ENCODE measurements at regions of chr17 and their contacts with region 1.

Region 1: GRCh38 chr17:68435876-68436842 is 21.1 kb downstream of the WIPI1 start:
- DNase-seq: peak; percentile 90
- H3K4me3 Mint-ChIP-seq: peak overlapping the region; percentile 38
- H3K27ac Mint-ChIP-seq: peak overlapping the region; percentile 79
- H3K4me1 Mint-ChIP-seq: peaks cover 51% of the 10 kb centered on the region
- H3K27me3 Mint-ChIP-seq: no peaks in the 10 kb centered on the region

Region 2: DNA sequence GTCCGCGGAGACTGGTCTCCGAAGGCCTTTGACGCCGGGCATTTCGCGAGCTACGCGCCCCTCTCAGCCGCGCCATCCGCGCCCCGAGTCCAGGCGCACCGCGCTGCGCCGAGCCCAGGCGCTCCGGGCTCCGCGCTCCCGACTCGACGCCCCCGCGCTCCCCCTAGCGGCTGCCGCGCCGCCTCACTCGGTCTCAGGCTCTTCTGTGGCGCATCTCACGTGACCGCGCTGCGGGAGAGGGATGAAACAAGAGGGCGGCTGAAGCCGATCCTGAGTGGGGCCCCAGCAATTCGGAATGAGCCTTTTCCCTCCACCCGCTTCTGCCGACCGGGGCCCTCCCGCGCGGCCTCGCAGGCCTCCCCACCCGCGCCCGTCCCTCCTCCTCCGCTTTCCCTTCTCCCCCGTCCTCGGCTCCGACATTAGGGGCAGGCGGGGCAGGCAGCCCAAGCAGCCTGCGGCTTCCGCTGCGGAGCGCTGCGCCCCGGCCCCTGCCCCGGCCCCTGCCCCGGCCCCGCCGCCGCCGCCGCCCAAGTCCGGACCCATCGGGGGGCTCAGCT is 230.8 kb before region 1 on chr17:
- CTCF ChIA-PET with region 1: interaction called, 17 read pairs
- POLR2A ChIA-PET with region 1: no interaction called
- intact Hi-C with region 1: loop called (anchors 2 kb)
- DNase-seq: peak; percentile 93
- H3K4me3 Mint-ChIP-seq: peak overlapping the region; percentile 81
- H3K27ac Mint-ChIP-seq: peak overlapping the region; percentile 89
- H3K4me1 Mint-ChIP-seq: peaks cover 32% of the 10 kb centered on the region
- H3K27me3 Mint-ChIP-seq: no peaks in the 10 kb centered on the region

Region 3: DNA sequence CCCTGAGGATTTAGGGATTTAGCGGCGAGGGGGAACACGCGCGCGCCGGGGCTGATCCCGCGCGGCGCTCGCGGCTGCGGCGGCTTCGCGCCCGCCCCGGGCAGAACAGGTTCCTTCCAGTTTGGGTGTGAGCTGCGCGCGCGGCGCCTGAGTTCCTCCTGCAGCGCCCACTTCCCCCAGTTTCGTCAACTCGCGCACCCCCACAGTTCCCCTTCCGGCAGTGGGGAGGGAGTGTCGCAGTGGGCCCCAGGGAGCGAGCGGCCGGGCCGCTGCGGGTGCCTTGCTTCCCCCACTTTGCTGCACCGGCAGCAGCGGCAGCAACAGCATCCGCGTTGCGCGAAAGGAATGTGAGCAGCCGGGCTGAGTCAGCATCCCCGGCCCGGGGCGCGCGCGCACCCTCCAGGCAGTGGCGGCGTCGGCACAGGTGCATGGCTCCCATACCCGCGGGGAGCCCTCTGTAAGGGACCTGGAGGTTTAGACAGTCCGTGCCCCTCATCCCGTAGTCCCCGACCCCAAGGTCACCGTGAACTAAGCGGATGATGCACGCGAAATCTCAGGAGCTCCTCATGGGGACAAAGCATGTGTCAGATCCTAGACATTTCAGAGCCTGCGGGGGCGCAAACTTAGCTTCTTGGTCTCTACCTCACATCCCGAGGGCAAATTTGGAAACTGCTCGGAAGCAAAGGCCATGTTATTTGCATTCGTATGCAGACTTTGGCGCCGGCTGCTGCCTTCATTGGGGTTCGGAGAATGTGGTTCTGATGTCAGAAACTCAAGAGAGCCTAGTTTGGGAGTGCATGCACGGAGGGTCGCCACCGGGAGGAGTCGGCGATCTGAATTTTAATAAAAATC is 144.1 kb before region 1 on chr17:
- CTCF ChIA-PET with region 1: interaction called, 17 read pairs
- POLR2A ChIA-PET with region 1: interaction called, 8 read pairs
- intact Hi-C with region 1: loop called (anchors 1 kb)
- DNase-seq: peak; percentile 91
- H3K4me3 Mint-ChIP-seq: peak overlapping the region; percentile 82
- H3K27ac Mint-ChIP-seq: peak overlapping the region; percentile 88
- H3K4me1 Mint-ChIP-seq: peaks cover 63% of the 10 kb centered on the region
- H3K27me3 Mint-ChIP-seq: no peaks in the 10 kb centered on the region

Region 4: DNA sequence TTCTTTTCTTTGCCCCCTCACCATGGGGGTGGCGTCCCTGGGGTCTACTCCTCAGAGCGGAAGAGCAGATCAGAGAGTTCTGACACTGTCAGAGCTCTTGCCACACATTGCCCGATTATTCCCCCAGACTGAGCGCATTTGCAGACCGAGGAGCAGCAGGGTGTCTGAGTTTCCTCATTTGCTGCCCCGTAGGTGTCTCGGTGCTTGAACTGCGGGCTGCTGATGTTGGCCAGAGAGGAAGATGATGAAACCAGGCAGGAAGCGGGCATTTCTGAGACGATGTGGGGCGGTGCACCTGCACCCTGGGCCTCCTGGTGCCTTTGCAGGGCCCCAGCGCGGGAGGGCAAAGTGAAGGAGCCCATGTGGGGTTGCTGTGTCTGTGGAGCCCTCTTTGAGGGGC is 89.7 kb before region 1 on chr17:
- CTCF ChIA-PET with region 1: no interaction called
- POLR2A ChIA-PET with region 1: no interaction called
- intact Hi-C with region 1: loop called (anchors 2 kb)
- DNase-seq: peak; percentile 89
- H3K4me3 Mint-ChIP-seq: peak overlapping the region; percentile 74
- H3K27ac Mint-ChIP-seq: peak overlapping the region; percentile 93
- H3K4me1 Mint-ChIP-seq: peaks cover 67% of the 10 kb centered on the region
- H3K27me3 Mint-ChIP-seq: no peaks in the 10 kb centered on the region

Region 5: DNA sequence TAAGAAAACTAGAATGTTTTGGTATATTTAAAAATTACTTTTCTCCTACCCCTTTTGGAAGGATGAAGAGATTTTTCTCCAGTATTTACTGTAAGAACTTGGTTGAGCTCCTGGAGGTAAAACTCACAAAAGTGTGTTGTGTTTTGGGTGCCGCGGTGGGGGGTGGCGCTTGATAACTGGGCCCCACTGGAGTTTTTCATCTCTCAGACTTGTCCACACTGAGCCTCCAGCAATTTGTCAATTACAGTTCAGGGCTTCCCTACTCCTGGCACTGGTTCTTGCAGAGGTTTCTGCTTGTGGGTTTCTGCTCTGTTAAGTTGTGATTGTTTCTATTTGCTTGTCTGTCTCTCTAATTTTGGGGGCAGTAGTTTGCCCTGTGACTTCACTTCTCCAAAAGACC is 18.8 kb before region 1 on chr17:
- CTCF ChIA-PET with region 1: interaction called, 12 read pairs
- POLR2A ChIA-PET with region 1: no interaction called
- intact Hi-C with region 1: no loop called
- DNase-seq: no peak
- H3K4me3 Mint-ChIP-seq: no peak overlapping the region
- H3K27ac Mint-ChIP-seq: no peak overlapping the region
- H3K4me1 Mint-ChIP-seq: peaks cover 19% of the 10 kb centered on the region
- H3K27me3 Mint-ChIP-seq: no peaks in the 10 kb centered on the region

Measured in activated CD4-positive, alpha-beta memory T cell treated with anti-CD3 and anti-CD28 coated beads for 36 hours (primary cell).